Activated CD4-positive, alpha-beta T cell treated with anti-CD3 and anti-CD28 coated beads, Interleukin-2, amount 10 ng/mL, durations not matched to agents 24 days and 14 days (primary cell): ENCODE measurements at regions of chr6 and their contacts with region 1.

Region 1: DNA sequence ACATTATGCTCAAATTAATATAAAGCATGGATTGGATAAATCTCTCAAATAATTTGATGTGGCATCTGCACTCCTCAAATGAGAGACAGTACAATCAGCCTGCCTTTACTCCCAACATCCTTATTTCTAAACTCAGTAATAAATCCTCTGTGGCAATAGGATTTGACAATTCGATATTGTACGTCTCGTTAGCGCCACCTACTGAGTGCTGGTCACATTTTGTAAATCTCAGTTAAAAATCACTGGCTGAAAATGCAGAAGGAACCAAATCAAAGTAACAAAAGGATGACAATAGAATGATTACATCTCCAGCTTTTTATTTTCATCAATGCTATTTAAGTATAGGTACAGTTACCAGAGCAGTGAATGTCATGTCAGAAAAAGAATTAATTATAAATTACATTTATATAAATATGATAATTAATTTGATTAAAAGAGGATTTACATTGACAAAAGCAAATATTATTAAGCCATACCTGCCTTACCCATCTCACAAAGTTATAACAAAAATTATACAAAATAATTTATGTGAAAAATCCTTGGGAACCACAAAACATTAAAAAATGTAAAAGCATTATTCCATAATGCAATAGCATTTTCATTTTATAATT is 20.2 kb upstream of the GJE1 start:
- DNase-seq: peak; percentile 87
- H3K4me3 Mint-ChIP-seq: no peak overlapping the region
- H3K27ac Mint-ChIP-seq: no peak overlapping the region
- H3K4me1 Mint-ChIP-seq: no peaks in the 10 kb centered on the region
- H3K27me3 Mint-ChIP-seq: peaks cover 4% of the 10 kb centered on the region

Region 2: GRCh38 chr6:141677598-141678211 is 434.9 kb before region 1 on chr6:
- intact Hi-C with region 1: loop called (anchors 2 kb)
- DNase-seq: no peak
- H3K4me3 Mint-ChIP-seq: no peak overlapping the region
- H3K27ac Mint-ChIP-seq: no peak overlapping the region
- H3K4me1 Mint-ChIP-seq: no peaks in the 10 kb centered on the region
- H3K27me3 Mint-ChIP-seq: no peaks in the 10 kb centered on the region

Region 3: GRCh38 chr6:141988954-141989705 is 123.4 kb before region 1 on chr6:
- intact Hi-C with region 1: loop called (anchors 1 kb)
- DNase-seq: peak; percentile 70
- H3K4me3 Mint-ChIP-seq: no peak overlapping the region
- H3K27ac Mint-ChIP-seq: no peak overlapping the region
- H3K4me1 Mint-ChIP-seq: no peaks in the 10 kb centered on the region
- H3K27me3 Mint-ChIP-seq: peaks cover 3% of the 10 kb centered on the region

Region 4: DNA sequence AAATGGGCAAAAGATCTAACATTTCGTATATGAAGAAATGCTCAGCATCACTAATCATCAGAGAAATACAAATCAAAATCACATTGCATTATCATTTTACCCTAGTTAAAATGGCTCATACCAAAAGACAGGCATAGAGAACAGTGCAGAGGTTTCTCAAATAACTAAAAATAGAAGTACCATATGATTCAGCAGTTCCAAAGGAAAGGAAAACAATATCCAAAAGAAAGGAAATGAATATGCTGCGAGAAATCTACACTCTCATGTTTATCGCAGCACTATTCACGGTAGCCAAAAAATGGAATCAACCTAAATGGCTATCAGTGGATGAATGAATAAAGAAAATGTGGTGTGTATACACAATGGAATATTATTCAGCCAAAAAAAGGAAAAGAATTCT is 98.0 kb after region 1 on chr6:
- intact Hi-C with region 1: no loop called
- DNase-seq: no peak
- H3K4me3 Mint-ChIP-seq: no peak overlapping the region
- H3K27ac Mint-ChIP-seq: no peak overlapping the region
- H3K4me1 Mint-ChIP-seq: no peaks in the 10 kb centered on the region
- H3K27me3 Mint-ChIP-seq: no peaks in the 10 kb centered on the region